ENCODE measurements at regions of chr7 and their contacts with region 1.

Region 1: GRCh38 chr7:17159500-17160037 is 138.9 kb upstream of the AHR start:
- DNase-seq: peak; percentile 33
- H3K4me3 Mint-ChIP-seq: no peak overlapping the region
- H3K27ac Mint-ChIP-seq: peak overlapping the region; percentile 70
- H3K4me1 Mint-ChIP-seq: peaks cover 38% of the 10 kb centered on the region
- H3K27me3 Mint-ChIP-seq: peaks cover 14% of the 10 kb centered on the region

Region 2: GRCh38 chr7:16999541-17000267 is 159.9 kb before region 1 on chr7:
- CTCF ChIA-PET with region 1: interaction called, 4 read pairs
- POLR2A ChIA-PET with region 1: no interaction called
- intact Hi-C with region 1: loop called (anchors 1 kb)
- DNase-seq: no peak
- H3K4me3 Mint-ChIP-seq: no peak overlapping the region
- H3K27ac Mint-ChIP-seq: peak overlapping the region; percentile 56
- H3K4me1 Mint-ChIP-seq: peaks cover 8% of the 10 kb centered on the region
- H3K27me3 Mint-ChIP-seq: no peaks in the 10 kb centered on the region

Region 3: GRCh38 chr7:17022920-17023319 is 136.6 kb before region 1 on chr7:
- CTCF ChIA-PET with region 1: no interaction called
- POLR2A ChIA-PET with region 1: no interaction called
- intact Hi-C with region 1: loop called (anchors 1 kb)
- DNase-seq: peak; percentile 60
- H3K4me3 Mint-ChIP-seq: no peak overlapping the region
- H3K27ac Mint-ChIP-seq: peak overlapping the region; percentile 7
- H3K4me1 Mint-ChIP-seq: peaks cover 17% of the 10 kb centered on the region
- H3K27me3 Mint-ChIP-seq: peaks cover 1% of the 10 kb centered on the region

Region 4: DNA sequence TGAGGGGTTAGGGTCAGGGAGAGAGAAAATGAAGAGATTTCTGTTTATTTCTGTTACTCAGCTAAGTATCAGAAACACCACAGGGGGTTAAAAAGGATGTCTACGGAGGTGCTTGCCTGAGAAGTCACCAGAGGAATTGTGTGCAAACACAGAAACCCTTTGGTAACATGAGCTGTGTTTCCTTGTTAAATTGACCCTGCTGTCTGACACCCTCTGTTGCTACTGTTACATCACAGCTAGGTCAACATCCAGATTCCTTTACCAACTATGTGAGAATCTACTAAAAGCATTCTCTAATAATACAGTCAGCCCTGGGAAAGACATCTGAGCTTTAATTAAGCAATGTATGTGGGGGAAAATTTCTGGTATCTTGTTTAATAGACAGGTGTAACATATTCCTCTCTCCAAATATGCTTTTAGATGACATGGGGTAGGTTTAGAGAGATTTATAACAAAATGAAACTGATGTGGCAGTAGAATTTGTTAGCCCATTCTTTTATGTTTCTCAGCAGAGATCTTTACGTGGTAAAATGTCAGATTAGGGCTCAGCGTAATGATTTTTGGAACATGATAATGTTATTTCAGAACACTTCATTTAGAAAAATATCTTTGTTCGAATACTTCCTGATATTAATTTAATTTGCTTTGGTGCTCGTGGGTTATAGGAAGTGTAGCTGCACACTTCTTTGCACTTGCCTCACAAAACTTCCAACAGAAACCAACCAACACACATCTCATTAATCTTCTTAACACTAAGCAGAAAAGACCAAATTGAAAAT is 29.1 kb before region 1 on chr7:
- CTCF ChIA-PET with region 1: no interaction called
- POLR2A ChIA-PET with region 1: interaction called, 7 read pairs
- intact Hi-C with region 1: loop called (anchors 1 kb)
- DNase-seq: no peak
- H3K4me3 Mint-ChIP-seq: no peak overlapping the region
- H3K27ac Mint-ChIP-seq: no peak overlapping the region
- H3K4me1 Mint-ChIP-seq: peaks cover 38% of the 10 kb centered on the region
- H3K27me3 Mint-ChIP-seq: peaks cover 2% of the 10 kb centered on the region

Region 5: DNA sequence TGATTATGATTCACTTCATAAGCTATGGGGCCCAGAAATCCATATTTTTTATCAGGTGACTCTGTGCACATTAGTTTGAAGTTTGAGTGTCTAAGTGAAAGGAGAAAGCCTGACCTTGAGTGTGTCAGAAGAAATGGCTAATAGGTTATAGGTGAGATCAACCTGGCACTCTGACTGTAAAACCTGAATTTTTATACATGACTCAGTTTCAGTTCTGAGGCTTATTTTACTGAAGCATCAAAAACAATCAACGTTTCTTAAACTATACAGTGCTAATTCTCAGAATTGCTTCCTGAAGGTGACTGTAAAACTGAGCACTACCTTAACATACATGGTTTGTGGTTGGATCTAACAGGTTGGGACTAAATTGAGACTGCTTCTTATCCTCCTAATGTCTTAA is 20.5 kb before region 1 on chr7:
- CTCF ChIA-PET with region 1: interaction called, 3 read pairs
- POLR2A ChIA-PET with region 1: interaction called, 6 read pairs
- intact Hi-C with region 1: loop called (anchors 1 kb)
- DNase-seq: no peak
- H3K4me3 Mint-ChIP-seq: no peak overlapping the region
- H3K27ac Mint-ChIP-seq: peak overlapping the region; percentile 82
- H3K4me1 Mint-ChIP-seq: peaks cover 70% of the 10 kb centered on the region
- H3K27me3 Mint-ChIP-seq: no peaks in the 10 kb centered on the region

Region 6: GRCh38 chr7:17144322-17144721 is 15.2 kb before region 1 on chr7:
- CTCF ChIA-PET with region 1: interaction called, 3 read pairs
- POLR2A ChIA-PET with region 1: interaction called, 6 read pairs
- intact Hi-C with region 1: loop called (anchors 1 kb)
- DNase-seq: peak; percentile 83
- H3K4me3 Mint-ChIP-seq: peak overlapping the region; percentile 43
- H3K27ac Mint-ChIP-seq: peak overlapping the region; percentile 53
- H3K4me1 Mint-ChIP-seq: peaks cover 46% of the 10 kb centered on the region
- H3K27me3 Mint-ChIP-seq: peaks cover 2% of the 10 kb centered on the region

Measured in activated CD4-positive, alpha-beta memory T cell treated with anti-CD3 and anti-CD28 coated beads for 36 hours (primary cell).